Dorsolateral prefrontal cortex (tissue), 120 donors: ENCODE measurements at regions of chr3 and their contacts with region 1.

Region 1: DNA sequence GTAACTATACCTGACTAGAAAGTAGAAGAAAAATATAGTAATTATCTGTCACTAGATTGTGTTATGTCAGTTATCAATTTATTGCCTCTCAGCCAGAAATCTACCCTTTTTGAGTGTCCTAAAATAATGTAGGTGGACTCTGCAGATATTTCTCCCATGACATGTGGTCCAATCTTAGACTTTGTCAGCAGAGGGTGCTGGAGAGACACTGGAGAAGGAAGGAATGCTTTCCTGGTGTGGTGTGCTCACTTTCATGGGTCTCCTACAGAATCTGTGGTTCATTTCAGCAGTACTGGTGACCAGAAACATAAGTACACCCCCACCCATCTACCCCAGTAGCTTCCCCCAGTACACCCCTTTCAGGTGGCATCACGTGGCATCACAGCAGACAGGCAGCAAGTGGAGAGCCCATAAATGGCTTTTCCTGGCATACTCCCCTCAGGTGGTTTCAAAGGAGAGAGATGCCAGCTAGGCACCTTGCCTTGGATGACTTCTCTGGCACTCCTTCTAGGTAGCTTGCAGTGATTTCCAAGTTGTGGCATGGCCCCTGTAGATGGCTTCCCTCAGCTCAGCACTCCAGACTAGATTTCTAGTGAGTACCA is 114.7 kb downstream of the GADL1 start:
- DNase-seq: no peak
- H3K4me3 ChIP-seq: no peak overlapping the region
- H3K27ac ChIP-seq: no peak overlapping the region
- H3K27me3 ChIP-seq: peaks cover 0 to 10% (median 0%) of the 10 kb centered on the region in 45 donors
- CTCF ChIP-seq: peak in 14 of 56 donors; percentile 6 to 33 (median 20)

Region 2: GRCh38 chr3:31754575-31755278 is 974.9 kb after region 1 on chr3:
- intact Hi-C with region 1: loop called in 1 of 2 experiments (anchors 10 kb)
- DNase-seq: no peak
- H3K4me3 ChIP-seq: no peak overlapping the region
- H3K27ac ChIP-seq: no peak overlapping the region
- H3K27me3 ChIP-seq: no peaks in the 10 kb centered on the region
- CTCF ChIP-seq: no peak

Region 3: DNA sequence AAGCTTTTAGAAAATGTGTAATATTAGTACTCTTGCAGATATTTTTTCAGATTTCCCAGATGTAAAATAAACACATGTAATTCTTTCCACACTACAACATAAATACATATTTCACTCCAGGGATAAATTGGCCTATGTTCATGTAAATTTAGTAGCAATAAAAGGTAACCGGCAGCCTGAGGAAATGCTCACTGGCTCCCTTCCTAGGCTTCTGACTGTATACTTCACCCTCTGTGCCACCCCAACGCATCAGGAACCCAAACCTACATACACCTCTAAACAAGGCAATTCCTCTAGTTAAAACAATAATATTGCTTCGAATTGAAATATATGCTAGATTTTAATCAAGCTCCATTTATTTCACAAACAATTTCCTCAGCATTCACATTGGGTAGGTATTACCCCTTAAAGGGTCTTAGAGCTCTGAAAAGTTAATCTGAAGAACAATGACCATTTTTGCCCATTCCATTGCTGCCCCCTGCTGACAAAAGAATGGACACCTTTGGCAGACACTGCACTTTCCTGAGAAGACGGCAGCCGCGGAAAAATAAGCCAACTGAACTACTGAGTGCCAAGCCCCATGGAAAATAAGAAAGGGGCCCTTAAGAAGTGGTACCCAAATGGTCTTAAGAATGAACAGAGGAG is 988.8 kb after region 1 on chr3:
- intact Hi-C with region 1: loop called in 1 of 2 experiments (anchors 5 kb)
- DNase-seq: peak in 7 of 10 donors; percentile 21 to 63 (median 45)
- H3K4me3 ChIP-seq: peak overlapping the region in 1 of 59 donors; percentile 19
- H3K27ac ChIP-seq: no peak overlapping the region
- H3K27me3 ChIP-seq: no peaks in the 10 kb centered on the region
- CTCF ChIP-seq: peak in 54 of 56 donors; percentile 29 to 85 (median 64)